ENCODE measurements at regions of chr4 and their contacts with region 1.

Region 1: DNA sequence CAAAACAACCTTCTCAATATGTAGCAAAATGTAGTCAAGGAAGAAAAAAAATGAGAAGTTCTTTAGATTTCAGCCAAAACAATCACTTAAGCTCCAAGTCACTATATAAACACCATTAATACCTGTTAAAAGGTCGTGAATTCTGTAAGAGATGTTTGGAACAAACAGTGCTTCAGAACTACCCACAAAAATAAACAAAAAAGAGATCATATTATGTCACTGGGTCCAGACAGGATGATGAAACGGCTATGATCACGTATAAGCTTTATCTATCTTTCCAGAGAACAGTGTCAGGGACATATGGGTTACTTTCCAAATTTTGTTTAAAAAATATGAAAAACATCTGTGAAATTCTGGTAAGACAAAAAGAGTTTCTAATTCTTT is 90.1 kb downstream of the SORBS2 start:
- DNase-seq: no peak
- ATAC-seq: no peak
- H3K4me3 Mint-ChIP-seq: no peak overlapping the region
- H3K27ac Mint-ChIP-seq: no peak overlapping the region
- H3K4me1 Mint-ChIP-seq: no peaks in the 10 kb centered on the region
- H3K27me3 Mint-ChIP-seq: peaks cover 10% of the 10 kb centered on the region

Region 2: GRCh38 chr4:185971241-185971640 is 249.3 kb after region 1 on chr4:
- POLR2A ChIA-PET with region 1: interaction called, 14 read pairs
- DNase-seq: no peak
- ATAC-seq: no peak
- H3K4me3 Mint-ChIP-seq: no peak overlapping the region
- H3K27ac Mint-ChIP-seq: no peak overlapping the region
- H3K4me1 Mint-ChIP-seq: no peaks in the 10 kb centered on the region
- H3K27me3 Mint-ChIP-seq: peaks cover 2% of the 10 kb centered on the region

Measured in activated naive CD8-positive, alpha-beta T cell treated with anti-CD3 and anti-CD28 coated beads, Interleukin-2, amount 10 ng/mL, durations not matched to agents 7 days and 5 days (primary cell).